GM10248 (cell line): ENCODE measurements at regions of chr7 and their contacts with region 1.

Region 1: DNA sequence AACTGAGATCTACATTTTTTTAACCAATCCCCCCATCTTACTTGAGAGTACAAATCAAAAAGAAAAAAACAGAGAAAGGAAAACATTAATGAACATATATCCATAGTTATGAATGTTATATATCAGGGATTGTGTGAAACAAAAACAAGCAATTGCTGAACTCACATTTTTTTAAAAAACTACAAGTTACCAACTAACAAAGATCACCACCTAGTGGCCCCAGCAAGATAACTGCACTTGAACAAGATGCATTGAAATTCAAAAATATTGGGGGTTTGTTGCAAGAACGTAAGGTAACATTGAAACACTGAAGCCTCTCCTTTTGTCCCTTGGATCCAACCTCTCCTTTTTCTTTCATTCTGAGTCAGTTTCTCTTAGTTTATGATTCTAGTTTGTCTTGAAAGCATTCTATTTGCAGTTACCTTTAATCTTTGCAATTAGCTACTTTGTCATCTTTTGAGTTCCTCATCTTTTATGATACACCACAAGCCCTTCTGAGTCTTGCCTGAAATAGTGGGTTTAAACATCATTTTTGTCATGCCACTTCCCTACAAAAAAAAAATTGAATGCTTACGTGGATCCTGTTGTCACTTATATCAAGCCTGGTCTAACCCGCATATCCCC is 87.3 kb upstream of the TES start:
- DNase-seq: peak; percentile 5
- CTCF ChIP-seq: peak; percentile 60

Region 2: GRCh38 chr7:116111475-116111874 is 11.6 kb before region 1 on chr7:
- CTCF ChIA-PET with region 1: interaction called, 10 read pairs
- POLR2A ChIA-PET with region 1: no interaction called
- DNase-seq: no peak
- CTCF ChIP-seq: no peak

Region 3: GRCh38 chr7:116271963-116272839 is 149.1 kb after region 1 on chr7:
- CTCF ChIA-PET with region 1: no interaction called
- POLR2A ChIA-PET with region 1: no interaction called
- DNase-seq: no peak
- CTCF ChIP-seq: no peak